ENCODE measurements at regions of chr2 and their contacts with region 1.

Region 1: DNA sequence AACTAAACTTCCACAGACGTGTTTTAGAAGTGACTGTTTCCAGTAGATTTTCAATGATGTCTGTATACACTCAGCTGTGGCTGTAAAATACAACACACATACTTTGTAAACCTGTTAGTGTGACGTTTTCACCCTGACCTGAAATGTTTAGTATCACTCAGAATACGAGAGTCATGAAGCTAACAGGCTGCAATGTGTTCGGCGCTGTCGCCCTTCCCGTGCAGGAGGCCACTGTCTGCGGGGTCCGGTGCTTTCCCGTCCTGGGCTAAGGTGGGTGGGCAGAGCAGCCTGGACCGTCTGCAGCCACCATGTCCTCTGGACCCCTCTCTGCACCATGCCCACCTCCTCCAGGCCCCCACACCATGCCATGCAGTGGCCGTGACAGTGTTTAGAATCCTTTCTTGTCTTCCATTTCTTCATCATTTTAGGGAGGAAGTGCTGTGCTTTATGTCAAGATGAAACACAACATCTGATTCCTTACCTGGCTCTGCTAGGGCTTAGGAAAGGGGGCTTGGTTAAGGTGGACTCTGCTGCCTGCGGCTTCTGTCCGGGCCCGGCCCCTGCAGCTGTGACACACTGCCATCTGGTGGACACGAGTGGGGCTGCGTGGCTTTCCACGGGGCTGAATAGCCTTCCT is 53.8 kb upstream of the RBM44 start:
- DNase-seq: peak; percentile 48 to 94 (median 86)

Region 2: GRCh38 chr2:237627441-237628246 is 117.1 kb before region 1 on chr2 and contains the start of gene LRRFIP1:
- intact Hi-C with region 1: no loop called
- DNase-seq: peak in 26 of 42 donors; percentile 8 to 68 (median 35)

Region 3: GRCh38 chr2:237662671-237663093 is 82.0 kb before region 1 on chr2:
- intact Hi-C with region 1: no loop called
- DNase-seq: peak in 39 of 42 donors; percentile 12 to 78 (median 42)

Region 4: DNA sequence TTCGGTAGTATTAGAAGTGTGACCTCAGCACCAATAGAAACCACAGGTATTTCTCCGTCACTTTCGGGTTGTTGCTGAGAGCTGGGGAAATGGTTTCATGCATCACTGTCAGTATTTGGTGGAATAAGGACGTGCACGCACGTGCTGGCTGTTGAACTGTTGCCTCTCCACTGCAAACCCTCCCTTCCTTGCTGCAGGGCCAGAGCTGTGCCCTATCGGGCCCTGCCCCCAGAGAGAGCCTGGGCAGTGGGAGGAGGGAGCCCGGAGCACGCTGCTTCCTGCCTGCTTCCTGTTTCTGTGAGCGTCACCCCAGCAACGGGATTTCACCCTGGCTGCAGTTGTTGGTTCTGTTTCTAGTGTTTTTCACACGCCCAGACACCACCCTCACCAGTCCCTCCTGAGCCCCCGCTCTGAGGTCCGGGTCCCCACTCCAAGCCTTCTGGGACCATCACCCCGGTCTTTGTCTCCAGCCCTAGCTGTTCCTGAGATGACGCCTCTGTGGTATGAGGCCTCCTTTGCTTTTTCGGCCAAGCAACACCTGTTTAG is 69.9 kb before region 1 on chr2:
- intact Hi-C with region 1: loop called (anchors 2 kb)
- DNase-seq: peak in 41 of 42 donors; percentile 38 to 83 (median 65)

Region 5: DNA sequence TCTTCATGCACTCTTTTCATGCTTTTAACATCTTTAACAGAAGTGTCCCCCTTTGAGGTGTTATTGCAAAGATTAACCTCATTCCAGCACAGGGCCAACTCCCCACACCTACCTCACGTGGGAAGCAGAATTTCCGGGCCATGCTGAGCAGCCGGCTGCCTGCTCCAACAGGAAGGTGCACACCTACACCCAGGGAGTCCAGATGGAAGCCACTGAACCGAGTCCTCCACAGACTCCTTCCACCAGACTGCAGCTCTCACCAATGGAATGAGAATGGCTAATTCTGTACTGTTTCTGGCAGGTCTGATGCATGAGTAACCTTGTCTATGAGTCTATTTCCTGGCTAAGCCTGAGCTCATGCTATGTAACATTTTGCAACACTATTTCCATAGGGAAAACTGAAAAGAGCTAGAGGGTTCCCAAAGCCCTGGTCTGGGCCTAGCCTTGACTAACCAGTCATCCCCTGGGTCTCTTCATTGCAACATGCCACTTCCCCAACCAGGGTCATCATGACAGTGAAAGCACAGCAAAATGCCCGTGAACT is 425.0 kb after region 1 on chr2:
- intact Hi-C with region 1: no loop called
- DNase-seq: peak in 32 of 42 donors; percentile 21 to 79 (median 46)

Measured in head of caudate nucleus (tissue), 42 donors.